A673 (cell line): ENCODE measurements at regions of chr4 and their contacts with region 1.

Region 1: DNA sequence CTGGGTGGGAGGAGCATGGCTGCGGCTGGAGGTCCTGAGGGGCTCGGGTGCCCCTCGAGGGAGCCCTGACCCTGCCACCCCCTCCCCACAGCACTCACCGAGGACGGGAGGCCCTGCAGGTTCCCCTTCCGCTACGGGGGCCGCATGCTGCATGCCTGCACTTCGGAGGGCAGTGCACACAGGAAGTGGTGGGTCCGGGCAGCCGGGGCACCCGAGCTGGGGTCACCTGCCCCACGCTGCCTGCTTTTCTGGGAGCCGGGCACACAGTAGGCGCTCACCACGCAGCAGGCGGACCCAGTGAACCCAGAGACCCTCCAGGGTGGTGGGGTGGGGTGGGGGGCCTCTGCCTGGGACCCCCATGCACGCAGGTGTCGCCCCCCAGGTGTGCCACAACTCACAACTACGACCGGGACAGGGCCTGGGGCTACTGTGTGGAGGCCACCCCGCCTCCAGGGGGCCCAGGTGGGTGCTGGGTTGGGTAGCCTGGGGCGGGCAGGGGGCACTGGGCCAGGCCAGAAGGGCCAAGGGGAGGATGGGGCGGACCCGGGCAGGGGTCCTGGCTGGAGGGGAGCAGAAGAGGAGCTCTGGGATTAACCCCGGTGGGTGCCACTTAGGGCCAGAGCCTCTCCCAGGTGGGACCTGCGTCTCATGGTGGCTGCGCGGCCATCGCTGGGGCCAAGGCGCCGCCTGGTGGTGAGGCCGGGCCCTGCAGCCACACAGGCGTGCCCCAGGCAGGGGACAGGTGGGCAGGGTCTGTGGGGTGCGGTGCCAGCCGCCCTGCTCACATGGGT is 1.4 kb downstream of the HGFAC start:
- DNase-seq: peak; percentile 70
- H3K4me3 ChIP-seq: no peak overlapping the region
- H3K27ac ChIP-seq: no peak overlapping the region
- H3K4me1 ChIP-seq: no peaks in the 10 kb centered on the region
- H3K27me3 ChIP-seq: no peaks in the 10 kb centered on the region
- CTCF ChIP-seq: peak; percentile 96

Region 2: GRCh38 chr4:3193531-3194203 is 249.5 kb before region 1 on chr4:
- CTCF ChIA-PET with region 1: no interaction called
- POLR2A ChIA-PET with region 1: no interaction called
- intact Hi-C with region 1: loop called (anchors 10 kb)
- DNase-seq: peak; percentile 19
- H3K4me3 ChIP-seq: no peak overlapping the region
- H3K27ac ChIP-seq: no peak overlapping the region
- H3K4me1 ChIP-seq: no peaks in the 10 kb centered on the region
- H3K27me3 ChIP-seq: no peaks in the 10 kb centered on the region
- CTCF ChIP-seq: peak; percentile 52

Region 3: GRCh38 chr4:3346146-3346545 is 97.0 kb before region 1 on chr4:
- CTCF ChIA-PET with region 1: interaction called, 8 read pairs
- POLR2A ChIA-PET with region 1: no interaction called
- intact Hi-C with region 1: loop called (anchors 1 kb)
- DNase-seq: peak; percentile 87
- H3K4me3 ChIP-seq: no peak overlapping the region
- H3K27ac ChIP-seq: peak overlapping the region; percentile 6
- H3K4me1 ChIP-seq: peaks cover 49% of the 10 kb centered on the region
- H3K27me3 ChIP-seq: no peaks in the 10 kb centered on the region
- CTCF ChIP-seq: peak; percentile 88